CD14-positive monocyte (primary cell): ENCODE measurements at regions of chr1 and their contacts with region 1.

Region 1: GRCh38 chr1:226679853-226680516 is 59.1 kb downstream of the ITPKB start:
- DNase-seq: peak; percentile 73 to 84 (median 82)
- H3K4me3 ChIP-seq: peak overlapping the region; percentile 27 to 71 (median 50)
- H3K4me3 Mint-ChIP-seq: peak overlapping the region; percentile 77 to 94
- H3K27ac ChIP-seq: peak overlapping the region; percentile 97 to 99
- H3K27ac Mint-ChIP-seq: peak overlapping the region; percentile 99 to 100 (median 99)
- H3K4me1 ChIP-seq: peaks cover 59 to 60% of the 10 kb centered on the region in 2 donors
- H3K4me1 Mint-ChIP-seq: peaks cover 73% of the 10 kb centered on the region
- H3K27me3 ChIP-seq: no peaks in the 10 kb centered on the region
- H3K27me3 Mint-ChIP-seq: peaks cover 0 to 3% (median 0%) of the 10 kb centered on the region in 3 donors
- CTCF ChIP-seq: no peak

Region 2: GRCh38 chr1:226642876-226643576 is 37.0 kb before region 1 on chr1:
- intact Hi-C with region 1: loop called in 1 of 2 experiments (anchors 5 kb)
- DNase-seq: peak; percentile 68 to 86 (median 72)
- H3K4me3 ChIP-seq: peak overlapping the region in 1 of 3 experiments; percentile 20
- H3K4me3 Mint-ChIP-seq: peak overlapping the region; percentile 60 to 86
- H3K27ac ChIP-seq: peak overlapping the region; percentile 77 to 87
- H3K27ac Mint-ChIP-seq: peak overlapping the region; percentile 89 to 98 (median 95)
- H3K4me1 ChIP-seq: peaks cover 34 to 35% of the 10 kb centered on the region in 2 donors
- H3K4me1 Mint-ChIP-seq: peaks cover 35% of the 10 kb centered on the region
- H3K27me3 ChIP-seq: no peaks in the 10 kb centered on the region
- H3K27me3 Mint-ChIP-seq: no peaks in the 10 kb centered on the region
- CTCF ChIP-seq: no peak

Region 3: GRCh38 chr1:226717256-226717909 is 37.4 kb after region 1 on chr1:
- intact Hi-C with region 1: loop called in 1 of 2 experiments (anchors 5 kb)
- DNase-seq: peak; percentile 80 to 86 (median 81)
- H3K4me3 ChIP-seq: peak overlapping the region in 1 of 3 experiments; percentile 59
- H3K4me3 Mint-ChIP-seq: peak overlapping the region; percentile 66 to 78
- H3K27ac ChIP-seq: peak overlapping the region; percentile 75 to 91
- H3K27ac Mint-ChIP-seq: peak overlapping the region; percentile 86 to 96 (median 94)
- H3K4me1 ChIP-seq: peaks cover 35 to 44% of the 10 kb centered on the region in 2 donors
- H3K4me1 Mint-ChIP-seq: peaks cover 59% of the 10 kb centered on the region
- H3K27me3 ChIP-seq: no peaks in the 10 kb centered on the region
- H3K27me3 Mint-ChIP-seq: no peaks in the 10 kb centered on the region
- CTCF ChIP-seq: no peak